CD4-positive, alpha-beta T cell (primary cell): ENCODE measurements at regions of chr1 and their contacts with region 1.

Region 1: DNA sequence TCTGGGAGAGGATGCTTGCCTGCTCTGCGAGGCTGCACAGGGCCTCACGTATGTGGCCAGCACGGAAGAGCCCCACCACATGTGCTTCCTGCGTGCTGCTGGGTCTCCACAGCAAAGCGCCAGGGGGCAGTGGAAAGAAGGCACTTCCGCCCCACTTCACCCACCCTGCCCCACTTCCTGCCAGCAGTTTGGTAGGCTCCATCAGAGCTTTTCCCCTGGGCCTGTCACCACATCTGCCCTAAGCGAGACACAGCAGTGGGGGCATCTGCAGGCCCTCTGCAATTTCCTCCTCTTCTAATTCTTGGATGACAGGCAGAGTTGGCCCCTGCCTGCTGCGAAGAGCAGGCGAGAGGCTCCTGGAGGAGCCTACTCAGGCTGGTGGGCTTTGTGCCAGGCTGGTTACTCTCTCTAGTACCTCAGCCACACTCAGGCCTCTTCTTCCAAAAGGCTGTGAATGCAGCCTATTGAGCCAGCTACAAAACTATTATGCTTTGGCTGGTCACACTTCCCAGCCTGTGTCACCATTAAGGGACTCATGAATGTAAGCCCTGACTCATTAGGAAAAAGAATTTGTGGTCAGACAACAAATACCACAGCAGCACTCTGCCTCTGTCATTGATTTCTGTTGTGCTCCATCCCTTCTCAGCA is 25.0 kb downstream of the CD244 start:
- DNase-seq: peak; percentile 68 to 95 (median 82)
- ATAC-seq: peak; percentile 96
- H3K4me3 ChIP-seq: peak overlapping the region; percentile 23
- H3K4me3 Mint-ChIP-seq: peak overlapping the region; percentile 79
- H3K27ac ChIP-seq: peak overlapping the region; percentile 76 to 79
- H3K27ac Mint-ChIP-seq: peak overlapping the region; percentile 96
- H3K4me1 ChIP-seq: peaks cover 55% of the 10 kb centered on the region
- H3K4me1 Mint-ChIP-seq: peaks cover 73% of the 10 kb centered on the region
- H3K27me3 ChIP-seq: no peaks in the 10 kb centered on the region
- H3K27me3 Mint-ChIP-seq: no peaks in the 10 kb centered on the region
- CTCF ChIP-seq: peak; percentile 65

Region 2: GRCh38 chr1:160330129-160330528 is 507.6 kb before region 1 on chr1:
- CTCF ChIA-PET with region 1: no interaction called
- POLR2A ChIA-PET with region 1: no interaction called
- intact Hi-C with region 1: no loop called
- DNase-seq: no peak
- ATAC-seq: no peak
- H3K4me3 ChIP-seq: no peak overlapping the region
- H3K4me3 Mint-ChIP-seq: no peak overlapping the region
- H3K27ac ChIP-seq: no peak overlapping the region
- H3K27ac Mint-ChIP-seq: no peak overlapping the region
- H3K4me1 ChIP-seq: no peaks in the 10 kb centered on the region
- H3K4me1 Mint-ChIP-seq: peaks cover 4% of the 10 kb centered on the region
- H3K27me3 ChIP-seq: no peaks in the 10 kb centered on the region
- H3K27me3 Mint-ChIP-seq: no peaks in the 10 kb centered on the region
- CTCF ChIP-seq: no peak

Region 3: GRCh38 chr1:160855181-160855981 is 17.7 kb after region 1 on chr1:
- CTCF ChIA-PET with region 1: interaction called, 4 read pairs
- POLR2A ChIA-PET with region 1: interaction called, 13 read pairs
- intact Hi-C with region 1: no loop called
- DNase-seq: peak in 2 of 14 experiments; percentile 21 to 67
- ATAC-seq: no peak
- H3K4me3 ChIP-seq: no peak overlapping the region
- H3K4me3 Mint-ChIP-seq: no peak overlapping the region
- H3K27ac ChIP-seq: no peak overlapping the region
- H3K27ac Mint-ChIP-seq: no peak overlapping the region
- H3K4me1 ChIP-seq: peaks cover 13% of the 10 kb centered on the region
- H3K4me1 Mint-ChIP-seq: peaks cover 3% of the 10 kb centered on the region
- H3K27me3 ChIP-seq: no peaks in the 10 kb centered on the region
- H3K27me3 Mint-ChIP-seq: no peaks in the 10 kb centered on the region
- CTCF ChIP-seq: no peak

Region 4: GRCh38 chr1:160877221-160877620 is 39.5 kb after region 1 on chr1:
- CTCF ChIA-PET with region 1: interaction called, 7 read pairs
- POLR2A ChIA-PET with region 1: interaction called, 21 read pairs
- intact Hi-C with region 1: loop called (anchors 1 kb)
- DNase-seq: peak in 4 of 14 experiments; percentile 15 to 71 (median 70)
- ATAC-seq: peak; percentile 84
- H3K4me3 ChIP-seq: no peak overlapping the region
- H3K4me3 Mint-ChIP-seq: no peak overlapping the region
- H3K27ac ChIP-seq: no peak overlapping the region
- H3K27ac Mint-ChIP-seq: no peak overlapping the region
- H3K4me1 ChIP-seq: peaks cover 12% of the 10 kb centered on the region
- H3K4me1 Mint-ChIP-seq: peaks cover 13% of the 10 kb centered on the region
- H3K27me3 ChIP-seq: no peaks in the 10 kb centered on the region
- H3K27me3 Mint-ChIP-seq: no peaks in the 10 kb centered on the region
- CTCF ChIP-seq: peak; percentile 63

Region 5: DNA sequence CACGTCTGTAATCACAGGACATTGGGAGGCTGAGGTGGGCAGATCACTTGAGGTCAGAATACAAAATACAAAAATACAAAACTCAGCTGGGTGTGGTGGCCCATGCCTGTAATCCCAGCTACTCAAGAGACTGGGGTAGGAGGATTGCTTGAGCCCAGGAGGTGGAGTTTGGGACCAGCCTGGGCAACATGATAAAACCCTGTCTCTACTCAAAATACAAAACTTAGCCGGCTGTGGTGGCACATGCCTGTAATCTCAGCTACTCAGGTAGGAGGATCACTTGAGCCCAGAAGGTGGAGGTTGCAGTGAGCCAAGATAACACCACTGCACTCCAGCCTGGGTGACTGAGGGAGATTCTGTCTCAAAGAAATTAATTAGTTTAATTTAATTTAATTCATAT is 53.8 kb after region 1 on chr1:
- CTCF ChIA-PET with region 1: no interaction called
- POLR2A ChIA-PET with region 1: no interaction called
- intact Hi-C with region 1: no loop called
- DNase-seq: no peak
- ATAC-seq: no peak
- H3K4me3 ChIP-seq: no peak overlapping the region
- H3K4me3 Mint-ChIP-seq: no peak overlapping the region
- H3K27ac ChIP-seq: no peak overlapping the region
- H3K27ac Mint-ChIP-seq: no peak overlapping the region
- H3K4me1 ChIP-seq: no peaks in the 10 kb centered on the region
- H3K4me1 Mint-ChIP-seq: no peaks in the 10 kb centered on the region
- H3K27me3 ChIP-seq: peaks cover 0 to 9% of the 10 kb centered on the region in 2 experiments
- H3K27me3 Mint-ChIP-seq: peaks cover 18% of the 10 kb centered on the region
- CTCF ChIP-seq: no peak

Region 6: GRCh38 chr1:160951443-160952128 is 113.9 kb after region 1 on chr1:
- CTCF ChIA-PET with region 1: interaction called, 20 read pairs
- POLR2A ChIA-PET with region 1: interaction called, 8 read pairs
- intact Hi-C with region 1: loop called (anchors 1 kb)
- DNase-seq: peak; percentile 52 to 84 (median 66)
- ATAC-seq: peak; percentile 91
- H3K4me3 ChIP-seq: no peak overlapping the region
- H3K4me3 Mint-ChIP-seq: no peak overlapping the region
- H3K27ac ChIP-seq: no peak overlapping the region
- H3K27ac Mint-ChIP-seq: no peak overlapping the region
- H3K4me1 ChIP-seq: peaks cover 10% of the 10 kb centered on the region
- H3K4me1 Mint-ChIP-seq: peaks cover 12% of the 10 kb centered on the region
- H3K27me3 ChIP-seq: no peaks in the 10 kb centered on the region
- H3K27me3 Mint-ChIP-seq: no peaks in the 10 kb centered on the region
- CTCF ChIP-seq: peak; percentile 68